Activated B cell treated with CpG ODN at 0.5 μM for 24 hours (primary cell): ENCODE measurements at regions of chrX and their contacts with region 1.

Region 1: GRCh38 chrX:10086676-10087075 is 70.1 kb upstream of the CLCN4 start:
- DNase-seq: no peak
- ATAC-seq: no peak
- H3K4me3 Mint-ChIP-seq: no peak overlapping the region
- H3K27ac Mint-ChIP-seq: no peak overlapping the region
- H3K4me1 Mint-ChIP-seq: peaks cover 69% of the 10 kb centered on the region
- H3K27me3 Mint-ChIP-seq: no peaks in the 10 kb centered on the region
- CTCF ChIP-seq: no peak

Region 2: DNA sequence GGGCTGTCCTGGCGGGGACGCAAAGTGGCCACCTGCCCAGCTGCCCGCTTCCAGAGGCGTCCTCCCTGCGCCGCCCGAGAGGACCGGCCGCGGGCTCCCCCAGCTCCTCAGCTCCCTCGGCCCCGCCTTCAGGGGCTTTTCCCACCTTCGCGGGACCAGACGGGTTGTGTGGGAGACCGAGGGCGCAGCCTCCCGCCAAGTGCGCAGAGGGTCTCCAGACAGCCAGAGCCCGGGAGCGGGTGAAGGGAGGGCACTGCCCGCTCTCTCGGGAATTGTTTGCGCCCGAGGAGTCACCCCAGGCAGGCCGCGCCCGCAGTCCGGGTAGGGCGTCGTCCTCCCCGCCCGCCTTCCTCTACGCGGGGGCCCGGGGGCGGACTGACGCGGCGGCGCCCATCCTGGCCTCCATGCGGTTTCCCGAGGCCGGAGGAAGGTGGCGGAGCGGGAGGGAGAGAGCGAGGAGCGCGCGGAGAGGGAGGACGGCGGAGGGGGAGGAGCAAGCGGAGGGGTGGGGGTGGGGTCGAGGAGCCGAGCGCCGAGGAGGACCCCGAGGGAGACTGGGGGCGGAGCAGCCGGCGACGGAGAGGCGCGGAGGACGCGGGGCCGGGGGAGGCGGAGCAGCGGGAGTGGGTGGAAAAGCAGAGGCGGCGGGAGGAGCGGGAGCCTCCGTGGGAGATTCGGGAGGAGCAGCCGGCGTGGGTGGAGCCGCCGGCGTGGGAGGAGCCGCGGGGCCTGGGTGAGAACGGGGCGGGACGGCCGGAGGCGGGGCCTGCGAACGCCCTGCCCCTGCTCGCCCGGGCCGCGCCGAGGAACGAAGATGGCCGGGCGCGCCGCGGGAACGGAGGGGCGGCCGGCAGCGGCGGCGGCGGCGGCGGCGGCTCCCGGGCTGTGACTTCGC is 72.0 kb before region 1 on chrX:
- CTCF ChIA-PET with region 1: interaction called, 4 read pairs
- POLR2A ChIA-PET with region 1: interaction called, 5 read pairs
- intact Hi-C with region 1: loop called (anchors 2 kb)
- DNase-seq: peak; percentile 81
- ATAC-seq: peak; percentile 83
- H3K4me3 Mint-ChIP-seq: peak overlapping the region; percentile 83
- H3K27ac Mint-ChIP-seq: peak overlapping the region; percentile 69
- H3K4me1 Mint-ChIP-seq: peaks cover 63% of the 10 kb centered on the region
- H3K27me3 Mint-ChIP-seq: no peaks in the 10 kb centered on the region
- CTCF ChIP-seq: no peak

Region 3: GRCh38 chrX:10098270-10098713 is 11.6 kb after region 1 on chrX:
- CTCF ChIA-PET with region 1: interaction called, 3 read pairs
- POLR2A ChIA-PET with region 1: interaction called, 53 read pairs
- intact Hi-C with region 1: loop called (anchors 1 kb)
- DNase-seq: no peak
- ATAC-seq: peak; percentile 81
- H3K4me3 Mint-ChIP-seq: peak overlapping the region; percentile 85
- H3K27ac Mint-ChIP-seq: peak overlapping the region; percentile 91
- H3K4me1 Mint-ChIP-seq: peaks cover 62% of the 10 kb centered on the region
- H3K27me3 Mint-ChIP-seq: no peaks in the 10 kb centered on the region
- CTCF ChIP-seq: no peak